ENCODE measurements at regions of chr19 and their contacts with region 1.

Region 1: DNA sequence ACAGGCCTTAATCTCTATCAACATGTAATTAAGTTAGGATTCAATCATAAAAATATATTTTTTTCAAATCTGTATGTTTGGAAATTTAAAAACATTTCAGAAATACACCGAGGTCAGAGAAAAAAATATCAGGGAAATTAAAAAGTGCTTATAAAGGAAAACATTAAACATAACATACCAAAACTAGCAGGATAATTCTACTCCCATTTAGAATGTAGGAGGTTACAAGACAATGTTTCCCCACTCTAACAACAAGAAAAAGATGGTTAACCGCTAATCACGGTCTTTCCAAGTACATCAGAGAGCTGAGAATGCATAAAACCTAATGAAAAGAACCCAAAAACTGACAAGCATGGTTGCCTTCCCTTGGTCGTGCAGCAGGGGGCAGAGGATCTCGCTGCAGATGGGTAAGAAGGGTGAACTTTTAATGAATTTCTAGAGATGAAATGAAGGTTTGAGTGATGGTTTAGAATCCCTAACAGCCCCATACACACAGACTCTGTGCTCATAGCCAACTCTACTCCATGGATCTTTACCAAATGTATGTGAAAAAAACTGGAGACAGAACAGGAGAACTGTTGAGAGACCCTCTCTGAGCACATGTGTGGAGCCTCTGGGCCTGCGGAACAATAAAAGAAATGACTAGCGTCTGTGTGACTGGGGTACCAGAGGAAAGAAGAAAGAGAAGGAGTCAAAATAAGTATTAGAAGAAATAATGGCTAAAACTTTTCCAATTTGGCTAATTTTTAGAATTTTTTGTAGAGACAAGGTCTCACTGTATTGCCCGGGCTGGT is 51.3 kb upstream of the LSM14A start:
- DNase-seq: peak; percentile 45 to 62 (median 56)
- ATAC-seq: peak; percentile 74
- H3K4me3 ChIP-seq: no peak overlapping the region
- H3K27ac ChIP-seq: no peak overlapping the region
- H3K4me1 ChIP-seq: no peaks in the 10 kb centered on the region
- H3K27me3 ChIP-seq: peaks cover 20 to 21% of the 10 kb centered on the region in 2 experiments; a peak in 4 of 5 replicates
- CTCF ChIP-seq: peak; percentile 83 to 84 (median 83)
- EP300 ChIP-seq: no peak
- POLR2A ChIP-seq: no peak
- RAD21 ChIP-seq: peak; percentile 37 to 69

Region 2: GRCh38 chr19:34134190-34135053 is 13.4 kb after region 1 on chr19:
- CTCF ChIA-PET with region 1: no interaction called
- POLR2A ChIA-PET with region 1: interaction called, 11 read pairs
- in situ Hi-C with region 1: no loop called
- intact Hi-C with region 1: no loop called
- DNase-seq: peak; percentile 93 to 99 (median 98)
- ATAC-seq: peak; percentile 97
- H3K4me3 ChIP-seq: peak overlapping the region; percentile 60
- H3K27ac ChIP-seq: peak overlapping the region; percentile 76
- H3K4me1 ChIP-seq: peaks cover 6 to 14% of the 10 kb centered on the region in 2 experiments; a peak in 3 of 5 replicates
- H3K27me3 ChIP-seq: peaks cover 0 to 11% of the 10 kb centered on the region in 2 experiments; a peak in 2 of 5 replicates
- CTCF ChIP-seq: no peak
- EP300 ChIP-seq: no peak
- POLR2A ChIP-seq: peak; percentile 95
- RAD21 ChIP-seq: no peak

Region 3: GRCh38 chr19:34145741-34146202 is 24.7 kb after region 1 on chr19:
- CTCF ChIA-PET with region 1: interaction called, 4 read pairs
- POLR2A ChIA-PET with region 1: interaction called, 3 read pairs
- in situ Hi-C with region 1: no loop called
- intact Hi-C with region 1: loop called (anchors 1 kb)
- DNase-seq: peak; percentile 61 to 73 (median 66)
- ATAC-seq: peak; percentile 85
- H3K4me3 ChIP-seq: no peak overlapping the region
- H3K27ac ChIP-seq: no peak overlapping the region
- H3K4me1 ChIP-seq: no peaks in the 10 kb centered on the region
- H3K27me3 ChIP-seq: no peaks in the 10 kb centered on the region; a peak in 2 of 5 replicates
- CTCF ChIP-seq: peak; percentile 84 to 93 (median 86)
- EP300 ChIP-seq: no peak
- POLR2A ChIP-seq: no peak
- RAD21 ChIP-seq: peak; percentile 77 to 91

Region 4: DNA sequence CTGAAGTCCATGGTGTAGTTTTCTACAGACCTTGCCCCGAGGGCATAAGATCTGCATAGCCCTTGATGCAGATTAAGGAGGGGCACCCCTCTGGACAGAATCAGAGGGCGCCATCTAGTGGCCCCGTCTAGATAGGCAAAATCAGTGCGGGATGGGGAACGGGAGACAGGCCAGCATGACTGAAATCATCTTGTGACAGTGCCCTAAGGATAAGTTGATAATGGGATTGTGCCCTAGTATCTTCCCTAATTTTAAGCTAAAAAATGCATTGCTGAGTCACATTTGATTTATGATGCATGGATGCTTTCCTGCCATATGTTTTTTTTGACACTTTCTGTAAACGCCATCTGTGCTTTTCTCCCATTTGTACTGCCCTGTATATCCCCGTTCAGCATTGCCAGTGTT is 224.9 kb after region 1 on chr19:
- CTCF ChIA-PET with region 1: no interaction called
- POLR2A ChIA-PET with region 1: no interaction called
- in situ Hi-C with region 1: no loop called
- intact Hi-C with region 1: loop called (anchors 10 kb)
- DNase-seq: peak; percentile 77 to 90 (median 82)
- ATAC-seq: peak; percentile 96
- H3K4me3 ChIP-seq: no peak overlapping the region
- H3K27ac ChIP-seq: no peak overlapping the region
- H3K4me1 ChIP-seq: peaks cover 0 to 3% of the 10 kb centered on the region in 2 experiments; a peak in 1 of 5 replicates
- H3K27me3 ChIP-seq: no peaks in the 10 kb centered on the region
- CTCF ChIP-seq: peak; percentile 82 to 86 (median 85)
- EP300 ChIP-seq: no peak
- POLR2A ChIP-seq: no peak
- RAD21 ChIP-seq: peak in 1 of 2 experiments; percentile 73; a peak in 2 of 4 replicates

Measured in K562 (cell line).